ENCODE measurements at regions of chr1 and their contacts with region 1.

Region 1: GRCh38 chr1:114353262-114353661 is 157.7 kb downstream of the TRIM33 start:
- DNase-seq: peak; percentile 48
- H3K4me3 ChIP-seq: no peak overlapping the region
- H3K27ac ChIP-seq: no peak overlapping the region
- H3K4me1 ChIP-seq: no peaks in the 10 kb centered on the region
- H3K27me3 ChIP-seq: no peaks in the 10 kb centered on the region
- CTCF ChIP-seq: no peak

Region 2: GRCh38 chr1:114145504-114146151 is 207.6 kb before region 1 on chr1:
- CTCF ChIA-PET with region 1: no interaction called
- dilution Hi-C with region 1: no loop called
- in situ Hi-C with region 1: no loop called
- intact Hi-C with region 1: no loop called
- DNase-seq: no peak
- H3K4me3 ChIP-seq: no peak overlapping the region
- H3K27ac ChIP-seq: no peak overlapping the region
- H3K4me1 ChIP-seq: no peaks in the 10 kb centered on the region
- H3K27me3 ChIP-seq: peaks cover 2% of the 10 kb centered on the region
- CTCF ChIP-seq: no peak

Region 3: DNA sequence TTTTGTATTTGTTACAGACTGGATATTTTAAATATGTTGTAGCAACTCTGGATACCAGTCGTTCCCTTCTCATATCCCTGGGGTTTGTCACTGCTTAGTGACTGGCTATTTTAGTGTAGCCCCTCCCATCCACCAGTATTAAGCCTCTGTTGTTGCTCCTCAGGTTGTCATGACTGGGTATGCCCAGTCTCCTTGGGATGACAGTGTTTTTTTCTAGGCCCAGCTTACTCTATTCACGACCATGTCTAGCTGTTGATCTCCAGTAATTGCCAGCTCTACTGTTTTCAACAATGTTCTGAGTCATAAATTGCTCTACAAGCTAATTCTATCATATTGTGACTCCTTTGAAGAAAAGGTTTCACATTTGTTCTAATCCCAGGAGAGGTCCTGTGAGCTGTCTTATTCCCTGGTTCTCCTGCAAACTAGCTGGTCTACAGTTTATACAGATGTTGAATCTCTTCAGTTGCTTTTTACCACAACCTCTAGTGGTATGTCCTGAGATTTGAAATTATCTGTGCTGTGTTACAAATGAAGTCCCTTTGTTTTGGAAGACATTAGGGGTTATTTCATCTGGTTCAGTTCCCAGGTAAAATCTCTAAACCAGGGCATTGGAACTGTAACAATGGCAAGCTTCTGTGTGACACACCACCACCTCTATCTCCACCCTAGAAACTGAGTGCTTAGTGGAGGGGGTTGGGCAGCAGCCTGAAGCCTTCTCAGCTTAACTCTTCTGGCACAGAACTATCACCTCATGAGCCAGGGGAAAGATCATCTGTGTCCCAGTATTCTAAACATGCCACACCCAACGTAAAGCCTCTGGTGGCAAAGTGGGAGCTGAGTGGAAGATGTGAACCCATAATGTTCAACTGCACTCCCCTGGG is 33.1 kb after region 1 on chr1:
- CTCF ChIA-PET with region 1: no interaction called
- dilution Hi-C with region 1: loop called (anchors 5 kb)
- in situ Hi-C with region 1: no loop called
- intact Hi-C with region 1: no loop called
- DNase-seq: no peak
- H3K4me3 ChIP-seq: no peak overlapping the region
- H3K27ac ChIP-seq: no peak overlapping the region
- H3K4me1 ChIP-seq: no peaks in the 10 kb centered on the region
- H3K27me3 ChIP-seq: no peaks in the 10 kb centered on the region
- CTCF ChIP-seq: no peak

Region 4: DNA sequence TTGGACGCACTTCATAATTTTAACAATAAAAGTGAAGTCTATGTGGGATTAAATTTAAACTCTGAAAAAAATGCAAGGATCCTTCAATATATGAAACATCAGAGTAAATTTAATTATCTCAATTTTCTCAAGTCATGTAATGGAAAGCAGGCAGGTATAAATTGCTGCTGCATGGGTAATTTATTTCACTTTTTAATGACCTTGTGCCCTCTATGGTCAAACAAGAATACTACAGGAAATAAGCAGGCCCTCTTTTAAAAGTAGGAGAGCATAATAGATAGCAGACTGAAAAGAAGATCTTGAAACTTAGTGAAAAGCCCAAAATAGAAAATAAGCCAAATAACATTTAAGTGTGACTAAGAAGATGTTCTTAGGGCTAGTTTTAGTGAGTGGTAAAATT is 205.3 kb after region 1 on chr1:
- CTCF ChIA-PET with region 1: no interaction called
- dilution Hi-C with region 1: loop called (anchors 5 kb)
- in situ Hi-C with region 1: loop called (anchors 10 to 25 kb)
- intact Hi-C with region 1: no loop called
- DNase-seq: peak; percentile 13
- H3K4me3 ChIP-seq: no peak overlapping the region
- H3K27ac ChIP-seq: no peak overlapping the region
- H3K4me1 ChIP-seq: no peaks in the 10 kb centered on the region
- H3K27me3 ChIP-seq: no peaks in the 10 kb centered on the region
- CTCF ChIP-seq: peak; percentile 39 to 50